ENCODE measurements at regions of chr6 and their contacts with region 1.

Region 1: GRCh38 chr6:133817460-133818047 is 71.4 kb upstream of the TCF21 start:
- DNase-seq: peak; percentile 62
- ATAC-seq: peak; percentile 64
- H3K4me3 Mint-ChIP-seq: no peak overlapping the region
- H3K27ac Mint-ChIP-seq: no peak overlapping the region
- H3K4me1 Mint-ChIP-seq: peaks cover 5% of the 10 kb centered on the region
- H3K27me3 Mint-ChIP-seq: peaks cover 9% of the 10 kb centered on the region
- CTCF ChIP-seq: peak; percentile 93

Region 2: GRCh38 chr6:133837801-133838349 is 20.3 kb after region 1 on chr6:
- CTCF ChIA-PET with region 1: interaction called, 11 read pairs
- POLR2A ChIA-PET with region 1: no interaction called
- intact Hi-C with region 1: no loop called
- DNase-seq: peak; percentile 71
- ATAC-seq: peak; percentile 83
- H3K4me3 Mint-ChIP-seq: peak overlapping the region; percentile 61
- H3K27ac Mint-ChIP-seq: no peak overlapping the region
- H3K4me1 Mint-ChIP-seq: peaks cover 6% of the 10 kb centered on the region
- H3K27me3 Mint-ChIP-seq: peaks cover 24% of the 10 kb centered on the region
- CTCF ChIP-seq: peak; percentile 88

Measured in activated CD8-positive, alpha-beta T cell treated with anti-CD3 and anti-CD28 coated beads for 36 hours (primary cell).